ENCODE measurements at regions of chr9 and their contacts with region 1.

Region 1: GRCh38 chr9:99140685-99141314 is 35.9 kb downstream of the TGFBR1 start:
- DNase-seq: peak in 1 of 2 experiments; percentile 21
- H3K4me3 ChIP-seq: no peak overlapping the region
- H3K27ac ChIP-seq: no peak overlapping the region
- H3K4me1 ChIP-seq: no peaks in the 10 kb centered on the region
- H3K27me3 ChIP-seq: no peaks in the 10 kb centered on the region
- CTCF ChIP-seq: peak; percentile 77 to 92 (median 86)
- EP300 ChIP-seq: no peak
- POLR2A ChIP-seq: no peak
- RAD21 ChIP-seq: peak; percentile 96

Region 2: DNA sequence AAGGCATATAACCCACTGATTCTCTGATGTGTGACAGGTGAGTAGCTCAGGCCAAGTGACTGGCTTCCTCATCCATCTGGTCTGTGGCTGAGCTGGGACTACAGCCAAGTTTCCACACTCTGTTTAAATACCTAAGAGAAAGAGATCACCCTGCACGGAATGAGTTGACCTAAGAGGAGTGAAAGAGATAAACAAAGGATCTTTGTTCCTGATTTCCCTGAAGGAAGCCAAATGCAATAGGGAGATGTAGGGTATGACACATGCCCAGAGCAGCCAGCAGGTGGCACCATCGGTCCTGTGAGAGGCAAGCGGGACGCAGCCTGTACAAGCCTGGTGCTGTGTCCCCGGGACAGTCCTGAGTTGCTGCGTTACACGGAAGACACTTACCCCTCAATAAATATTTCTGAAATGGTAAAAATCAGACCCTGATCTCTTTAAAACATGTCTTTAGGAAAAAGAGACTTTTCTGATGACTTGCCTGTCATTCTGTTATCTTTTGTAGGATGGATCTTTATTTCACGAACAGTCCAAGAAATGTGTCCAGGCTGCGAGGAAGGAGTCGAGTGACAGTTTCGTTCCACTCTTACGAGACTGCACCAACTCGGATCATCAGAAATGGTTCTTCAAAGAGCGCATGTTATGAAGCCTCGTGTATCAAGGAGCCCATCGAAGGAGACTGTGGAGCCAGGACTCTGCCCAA is 292.2 kb before region 1 on chr9:
- CTCF ChIA-PET with region 1: interaction called, 44 read pairs
- POLR2A ChIA-PET with region 1: no interaction called
- DNase-seq: peak; percentile 83 to 91
- H3K4me3 ChIP-seq: no peak overlapping the region
- H3K27ac ChIP-seq: no peak overlapping the region
- H3K4me1 ChIP-seq: peaks cover 0 to 5% (median 2%) of the 10 kb centered on the region in 4 experiments; a peak in 3 of 7 replicates
- H3K27me3 ChIP-seq: no peaks in the 10 kb centered on the region
- CTCF ChIP-seq: peak; percentile 86 to 96 (median 96)
- EP300 ChIP-seq: no peak
- POLR2A ChIP-seq: no peak
- RAD21 ChIP-seq: peak; percentile 95 to 98

Region 3: DNA sequence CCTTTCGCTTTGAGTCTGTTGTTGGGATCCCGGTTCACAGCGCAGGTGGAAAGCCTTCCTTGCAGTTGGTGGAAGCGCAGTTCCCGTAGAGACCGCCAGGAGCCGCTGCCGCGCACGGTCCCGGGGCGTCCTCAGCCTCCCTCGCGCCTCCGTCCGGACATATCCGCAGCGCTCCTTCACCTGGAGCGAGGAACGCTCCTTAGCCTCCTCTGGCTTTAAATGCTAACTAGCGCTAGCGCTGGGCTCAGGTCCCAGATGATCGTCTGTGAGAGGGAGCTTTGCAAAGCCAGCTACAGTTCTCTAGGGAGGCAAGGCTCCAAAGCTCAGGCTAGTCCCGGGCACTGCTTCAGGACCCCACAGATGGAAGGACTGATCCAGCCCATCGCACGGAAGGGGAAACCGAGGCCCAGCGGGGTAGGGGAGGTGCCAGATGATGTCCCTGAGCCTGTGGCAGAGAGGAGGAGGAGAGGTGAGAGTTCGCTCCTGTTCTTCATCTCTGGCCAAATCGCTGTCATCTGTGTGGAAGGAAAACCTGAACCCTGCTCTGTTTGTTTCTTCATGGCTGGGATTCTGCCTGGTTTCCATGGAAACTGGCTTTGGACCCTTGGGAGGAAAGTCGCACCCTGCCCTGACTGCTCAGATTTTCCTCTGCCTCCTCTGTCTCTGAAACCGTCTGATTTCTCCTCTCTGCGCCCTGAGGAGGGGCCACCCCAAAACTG is 165.6 kb before region 1 on chr9:
- CTCF ChIA-PET with region 1: interaction called, 28 read pairs
- POLR2A ChIA-PET with region 1: no interaction called
- DNase-seq: peak; percentile 69 to 99
- H3K4me3 ChIP-seq: peak overlapping the region in 1 of 4 experiments; percentile 38; a peak in 1 of 8 replicates
- H3K27ac ChIP-seq: no peak overlapping the region
- H3K4me1 ChIP-seq: peaks cover 4 to 19% (median 9%) of the 10 kb centered on the region in 4 experiments
- H3K27me3 ChIP-seq: peaks cover 7 to 44% (median 28%) of the 10 kb centered on the region in 4 experiments
- CTCF ChIP-seq: peak; percentile 93 to 99 (median 99)
- EP300 ChIP-seq: no peak
- POLR2A ChIP-seq: no peak
- RAD21 ChIP-seq: peak; percentile 76 to 89

Region 4: DNA sequence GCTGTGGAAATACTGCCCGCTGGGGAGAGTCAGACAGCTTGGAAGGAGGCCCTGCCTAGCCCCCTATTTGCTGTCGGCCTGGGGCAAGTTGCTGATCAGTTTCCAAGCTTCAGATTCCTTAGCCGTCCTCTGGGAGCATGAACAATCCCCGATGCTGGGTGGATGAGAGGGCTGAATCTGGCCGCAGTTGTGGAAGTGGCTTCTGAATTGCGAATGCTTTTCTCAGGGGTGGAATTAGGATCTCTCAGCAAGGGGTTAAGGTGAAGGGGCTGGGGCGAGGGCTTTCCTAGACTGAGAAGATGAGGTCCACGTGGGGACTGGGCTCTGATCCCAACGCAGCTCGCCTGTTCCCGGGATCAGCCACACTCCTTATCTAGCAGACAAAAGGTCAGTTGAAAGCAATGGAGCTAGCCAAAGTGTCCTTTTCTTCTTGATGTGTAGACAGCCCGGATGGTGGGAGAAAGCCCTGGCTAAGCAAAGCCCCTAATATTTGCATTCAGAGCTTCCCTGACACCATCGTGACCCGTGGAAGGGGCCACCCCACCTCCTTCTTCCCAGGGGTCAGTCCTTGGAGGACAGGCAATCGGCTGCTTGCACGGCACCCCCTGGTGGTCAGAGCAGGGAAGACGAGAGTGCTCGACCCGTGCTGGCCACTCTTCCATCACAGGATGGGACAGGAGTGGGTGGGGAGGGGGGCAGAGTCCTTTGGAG is 142.2 kb before region 1 on chr9:
- CTCF ChIA-PET with region 1: interaction called, 108 read pairs
- POLR2A ChIA-PET with region 1: no interaction called
- DNase-seq: peak; percentile 58 to 97
- H3K4me3 ChIP-seq: no peak overlapping the region
- H3K27ac ChIP-seq: no peak overlapping the region
- H3K4me1 ChIP-seq: peaks cover 0 to 4% (median under 1%) of the 10 kb centered on the region in 4 experiments; a peak in 2 of 7 replicates
- H3K27me3 ChIP-seq: no peaks in the 10 kb centered on the region; a peak in 1 of 7 replicates
- CTCF ChIP-seq: peak; percentile 81 to 98 (median 92)
- EP300 ChIP-seq: no peak
- POLR2A ChIP-seq: no peak
- RAD21 ChIP-seq: peak; percentile 79 to 87

Region 5: DNA sequence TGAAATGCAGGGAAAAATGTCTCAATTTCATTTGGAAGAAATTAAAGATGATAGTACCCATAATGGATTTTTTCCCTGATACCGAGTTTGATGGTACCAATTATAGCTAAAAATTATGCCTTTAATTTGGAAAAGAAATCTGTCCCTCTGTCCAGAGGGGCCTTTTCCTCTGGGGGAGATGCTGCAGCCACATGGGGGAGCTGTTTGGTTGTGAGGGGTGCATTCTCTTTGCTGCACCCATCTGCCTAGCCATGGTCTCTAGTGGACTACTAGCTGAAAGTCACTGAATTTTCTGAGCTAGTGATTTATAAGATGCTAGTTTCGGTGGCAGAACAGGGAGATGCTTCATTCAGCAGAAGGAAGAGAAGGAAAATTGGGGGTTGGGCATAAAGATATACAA is 90.9 kb after region 1 on chr9:
- CTCF ChIA-PET with region 1: no interaction called
- POLR2A ChIA-PET with region 1: no interaction called
- DNase-seq: peak in 1 of 2 experiments; percentile 55
- H3K4me3 ChIP-seq: no peak overlapping the region
- H3K27ac ChIP-seq: no peak overlapping the region
- H3K4me1 ChIP-seq: no peaks in the 10 kb centered on the region
- H3K27me3 ChIP-seq: no peaks in the 10 kb centered on the region
- CTCF ChIP-seq: peak; percentile 68 to 73 (median 69)
- EP300 ChIP-seq: no peak
- POLR2A ChIP-seq: no peak
- RAD21 ChIP-seq: peak; percentile 58 to 65